ENCODE measurements at regions of chr5 and their contacts with region 1.

Region 1: DNA sequence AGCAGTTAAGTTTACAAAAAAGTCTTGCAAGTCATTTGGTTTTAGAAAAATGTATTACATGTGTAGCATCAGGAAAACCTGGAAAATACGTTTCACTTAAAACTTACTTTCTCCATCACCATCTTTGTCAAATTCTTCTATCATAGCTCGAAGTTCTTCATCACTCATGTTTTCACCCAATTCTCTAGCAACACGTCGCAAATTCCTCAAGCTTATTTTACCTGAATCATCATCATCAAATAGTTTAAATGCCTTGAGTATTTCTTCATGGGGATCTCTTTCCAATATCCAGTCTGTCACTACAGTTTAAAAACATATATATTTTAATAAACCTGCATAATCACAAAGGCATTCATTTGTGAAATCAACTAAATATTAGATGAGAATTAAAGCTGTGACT is 10.3 kb downstream of the CETN3 start:
- DNase-seq: no peak
- CTCF ChIP-seq: no peak

Region 2: GRCh38 chr5:90248640-90249039 is 150.6 kb before region 1 on chr5:
- CTCF ChIA-PET with region 1: no interaction called
- POLR2A ChIA-PET with region 1: no interaction called
- DNase-seq: no peak
- CTCF ChIP-seq: no peak

Region 3: GRCh38 chr5:90386099-90386710 is 13.0 kb before region 1 on chr5:
- CTCF ChIA-PET with region 1: interaction called, 10 read pairs
- POLR2A ChIA-PET with region 1: no interaction called
- DNase-seq: no peak
- CTCF ChIP-seq: peak; percentile 35

Region 4: GRCh38 chr5:90409318-90410177 is 10.3 kb after region 1 on chr5 and contains the start of gene CETN3:
- CTCF ChIA-PET with region 1: interaction called, 10 read pairs
- POLR2A ChIA-PET with region 1: no interaction called
- DNase-seq: peak; percentile 90
- CTCF ChIP-seq: no peak